PC-9 (cell line): ENCODE measurements at regions of chr12 and their contacts with region 1.

Region 1: DNA sequence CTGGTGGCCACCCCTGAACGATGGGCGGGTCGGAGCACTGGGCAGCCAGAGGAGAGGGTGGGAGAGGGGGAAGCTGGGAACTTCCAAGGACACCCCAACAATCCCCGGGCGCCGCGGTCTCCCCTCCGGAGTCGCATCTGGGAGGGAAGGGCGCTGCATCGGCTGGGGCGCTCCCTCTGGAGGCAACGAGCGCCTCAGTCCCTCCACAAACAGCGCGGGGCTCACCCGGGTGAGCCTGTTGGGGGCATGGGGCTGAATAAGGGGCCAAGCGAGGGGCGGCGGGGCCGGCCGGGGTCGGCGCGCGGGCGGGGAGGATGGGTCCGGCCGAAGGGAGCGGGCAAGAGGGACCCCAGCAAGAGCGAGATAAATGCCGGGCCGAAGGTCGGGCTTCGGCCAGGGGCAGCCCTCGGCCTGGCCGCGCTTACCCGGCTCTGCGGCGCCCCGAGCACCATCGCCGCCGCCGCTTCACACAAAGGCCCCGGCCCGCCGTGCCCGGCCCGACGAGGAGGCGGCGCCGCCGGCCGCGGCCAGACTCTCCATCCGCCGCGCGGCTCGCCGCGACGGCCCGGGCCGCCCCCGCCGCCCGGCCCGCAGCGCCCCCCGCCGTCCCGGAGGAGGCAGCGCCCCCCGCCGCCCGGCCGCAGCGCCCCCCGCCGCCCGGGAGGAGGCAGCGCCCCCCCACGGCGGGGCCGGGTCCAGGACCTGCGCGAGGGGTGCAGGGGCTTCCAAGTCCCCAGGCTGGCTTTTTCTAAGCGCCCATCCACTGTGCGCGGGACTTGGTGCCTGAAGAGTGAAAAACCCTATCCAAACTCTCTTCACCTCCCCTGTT is at the start of gene ZBTB39:
- DNase-seq: peak in 1 of 2 experiments; percentile 70
- H3K4me3 ChIP-seq: peak within 1 kb of the TSS; percentile 62
- H3K27ac ChIP-seq: no peak within 1 kb of the TSS
- H3K4me1 ChIP-seq: peaks cover 11% of the 10 kb centered on the region
- H3K27me3 ChIP-seq: no peaks in the 10 kb centered on the region
- CTCF ChIP-seq: peak; percentile 68; the same call in 1 of the 2 replicates
- total RNA-seq, gene ZBTB39: 6.5 and 7.6 TPM in 2 replicates

Region 2: DNA sequence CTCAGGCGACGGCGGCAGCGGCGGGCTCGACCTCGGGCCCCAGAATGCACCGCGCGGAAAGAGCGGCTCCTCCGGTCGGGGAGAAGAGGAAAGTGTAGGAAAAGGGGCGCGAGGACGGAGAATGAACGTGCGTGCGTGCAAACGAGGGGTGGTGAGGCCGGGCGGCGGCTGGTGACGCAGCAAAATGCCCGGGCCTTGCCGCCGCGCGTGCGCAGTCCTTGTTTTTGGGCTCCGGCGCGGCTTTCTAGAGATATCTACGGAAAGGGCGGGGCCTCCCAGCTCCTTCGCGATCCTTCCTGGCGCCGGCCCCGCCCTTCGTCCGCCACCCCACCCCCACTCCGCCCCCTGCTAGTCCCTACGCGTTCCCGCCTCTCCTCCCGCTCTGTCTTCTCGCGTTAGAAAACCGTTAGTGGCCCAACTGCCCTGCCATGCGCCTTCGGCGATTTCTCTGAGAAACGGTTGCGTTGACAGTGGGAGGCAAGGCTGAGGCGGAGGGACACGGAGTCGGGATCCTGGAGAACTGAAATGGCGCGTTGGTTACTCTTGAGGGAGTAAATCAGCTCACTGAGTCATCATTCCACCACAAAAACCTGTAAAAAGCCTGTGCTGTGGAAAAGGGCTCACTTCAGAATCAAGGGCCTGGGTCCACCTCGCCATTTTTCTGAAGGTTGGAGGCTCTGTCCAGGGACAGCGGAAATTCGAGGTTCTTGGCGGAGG is 317.9 kb before region 1 on chr12 and contains the start of gene PTGES3:
- CTCF ChIA-PET with region 1: interaction called, 10 read pairs
- POLR2A ChIA-PET with region 1: no interaction called
- intact Hi-C with region 1: no loop called
- DNase-seq: peak; percentile 92 to 97
- H3K4me3 ChIP-seq: peak within 1 kb of the TSS; percentile 97
- H3K27ac ChIP-seq: peak within 1 kb of the TSS; percentile 94
- H3K4me1 ChIP-seq: peaks cover 15% of the 10 kb centered on the region
- H3K27me3 ChIP-seq: no peaks in the 10 kb centered on the region
- CTCF ChIP-seq: no peak
- total RNA-seq, gene PTGES3: 227 and 322 TPM in 2 replicates

Region 3: GRCh38 chr12:56839915-56840325 is 166.3 kb before region 1 on chr12:
- CTCF ChIA-PET with region 1: interaction called, 4 read pairs
- POLR2A ChIA-PET with region 1: no interaction called
- intact Hi-C with region 1: loop called (anchors 1 kb)
- DNase-seq: peak; percentile 37 to 56
- H3K4me3 ChIP-seq: no peak overlapping the region
- H3K27ac ChIP-seq: no peak overlapping the region
- H3K4me1 ChIP-seq: no peaks in the 10 kb centered on the region
- H3K27me3 ChIP-seq: no peaks in the 10 kb centered on the region
- CTCF ChIP-seq: peak; percentile 70

Region 4: DNA sequence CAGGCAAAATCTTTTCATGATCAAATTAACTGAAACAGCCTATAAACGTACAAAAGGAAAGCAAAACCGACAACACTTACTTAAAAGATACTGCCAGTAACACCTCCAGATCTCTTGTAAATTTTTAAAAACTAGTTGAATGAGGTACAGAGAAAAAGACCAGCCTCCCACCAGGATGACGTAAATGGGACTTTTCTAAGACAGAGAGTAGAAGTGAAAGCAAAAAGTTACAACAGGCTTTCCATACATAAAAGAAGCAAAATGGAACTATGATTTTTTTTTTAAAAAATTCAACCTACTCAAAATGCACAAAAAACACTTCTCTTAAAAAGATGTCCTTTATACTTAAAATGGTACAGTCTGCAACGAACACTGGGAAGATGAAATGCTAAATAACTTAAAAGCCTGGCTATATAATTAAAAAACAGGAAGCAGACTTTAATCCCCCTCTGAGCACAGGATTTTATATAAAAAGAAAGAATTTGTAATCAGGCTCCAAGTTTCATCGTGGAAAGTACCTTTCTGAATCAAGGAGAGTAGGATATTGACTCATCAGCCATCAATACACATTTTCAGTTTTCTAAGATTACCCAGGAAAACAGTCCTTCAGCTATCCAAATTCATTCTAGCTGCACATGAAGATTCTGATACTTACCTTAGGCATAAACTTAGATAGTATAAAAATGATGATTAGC is 57.9 kb after region 1 on chr12:
- CTCF ChIA-PET with region 1: no interaction called
- POLR2A ChIA-PET with region 1: no interaction called
- intact Hi-C with region 1: loop called (anchors 1 kb)
- DNase-seq: no peak
- H3K4me3 ChIP-seq: no peak overlapping the region
- H3K27ac ChIP-seq: no peak overlapping the region
- H3K4me1 ChIP-seq: no peaks in the 10 kb centered on the region
- H3K27me3 ChIP-seq: no peaks in the 10 kb centered on the region
- CTCF ChIP-seq: no peak

Region 5: GRCh38 chr12:57238854-57239554 is 232.8 kb after region 1 on chr12:
- CTCF ChIA-PET with region 1: no interaction called
- POLR2A ChIA-PET with region 1: no interaction called
- intact Hi-C with region 1: loop called (anchors 1 kb)
- DNase-seq: peak; percentile 48 to 89
- H3K4me3 ChIP-seq: peak overlapping the region; percentile 51; the same call in 1 of the 2 replicates
- H3K27ac ChIP-seq: no peak overlapping the region
- H3K4me1 ChIP-seq: peaks cover 22% of the 10 kb centered on the region; the same call in 1 of the 2 replicates
- H3K27me3 ChIP-seq: peaks cover 30% of the 10 kb centered on the region
- CTCF ChIP-seq: peak; percentile 97